ENCODE measurements at regions of chr1 and their contacts with region 1.

Region 1: GRCh38 chr1:179121159-179121938 is 39.5 kb downstream of the TOR3A start:
- DNase-seq: peak; percentile 62
- ATAC-seq: peak; percentile 66
- H3K4me3 ChIP-seq: no peak overlapping the region
- H3K27ac ChIP-seq: no peak overlapping the region; the same call in 1 of the 2 replicates
- H3K4me1 ChIP-seq: peaks cover 5% of the 10 kb centered on the region
- H3K27me3 ChIP-seq: no peaks in the 10 kb centered on the region
- CTCF ChIP-seq: peak; percentile 64
- POLR2A ChIP-seq: no peak
- RAD21 ChIP-seq: peak; percentile 62

Region 2: DNA sequence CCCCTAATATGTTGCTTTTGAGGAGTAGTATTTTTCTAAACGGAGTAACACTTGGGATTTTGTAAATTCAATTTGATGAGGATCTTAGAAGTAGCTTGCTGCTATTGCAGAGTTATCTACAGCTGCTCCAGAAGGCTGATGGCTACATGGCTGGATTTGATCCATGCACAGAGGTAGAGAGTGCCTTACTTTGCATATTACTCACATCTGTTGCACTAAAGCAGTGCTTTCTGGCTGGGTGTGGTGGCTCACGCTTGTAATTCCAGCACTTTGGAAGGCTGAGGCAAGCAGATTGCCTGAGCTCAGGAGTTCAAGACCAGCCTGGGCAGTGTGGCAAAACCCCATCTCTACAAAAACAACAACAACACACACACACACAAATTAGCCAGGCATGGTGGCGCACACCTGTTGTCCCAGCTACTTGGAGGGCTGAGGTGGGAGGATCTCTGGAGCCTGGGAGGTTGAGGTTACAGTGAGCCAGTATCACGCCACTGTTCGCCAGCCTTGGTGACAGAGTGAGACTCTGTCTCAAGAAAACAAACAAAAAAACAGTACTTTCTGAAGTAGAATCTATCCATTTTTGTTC is 371.7 kb before region 1 on chr1:
- CTCF ChIA-PET with region 1: no interaction called
- POLR2A ChIA-PET with region 1: no interaction called
- dilution Hi-C with region 1: no loop called
- in situ Hi-C with region 1: no loop called
- intact Hi-C with region 1: no loop called
- DNase-seq: no peak
- ATAC-seq: no peak
- H3K4me3 ChIP-seq: no peak overlapping the region
- H3K27ac ChIP-seq: no peak overlapping the region
- H3K4me1 ChIP-seq: peaks cover 8% of the 10 kb centered on the region
- H3K27me3 ChIP-seq: no peaks in the 10 kb centered on the region
- CTCF ChIP-seq: no peak
- POLR2A ChIP-seq: no peak
- RAD21 ChIP-seq: no peak

Region 3: DNA sequence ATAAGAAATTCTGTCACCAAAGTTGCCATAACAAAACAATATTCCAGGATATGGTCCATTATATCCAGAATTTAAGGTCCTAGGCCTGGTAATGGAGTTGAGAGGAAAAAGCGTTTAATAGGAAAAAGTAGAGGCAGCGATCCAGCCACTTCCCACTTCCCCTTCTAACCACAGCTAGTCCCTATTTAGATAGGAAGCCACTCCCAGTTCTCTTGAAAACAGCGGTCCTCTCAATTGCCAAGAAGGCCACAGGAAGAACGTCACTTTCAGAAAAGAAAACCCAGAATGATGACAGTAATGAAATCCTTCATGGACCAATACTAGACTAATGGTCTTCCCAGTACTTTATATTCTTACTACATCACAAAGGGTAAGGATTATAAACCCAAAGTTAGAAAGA is 69.5 kb after region 1 on chr1:
- CTCF ChIA-PET with region 1: interaction called, 3 read pairs
- POLR2A ChIA-PET with region 1: no interaction called
- dilution Hi-C with region 1: no loop called
- in situ Hi-C with region 1: loop called (anchors 5 kb)
- intact Hi-C with region 1: loop called (anchors 1 kb)
- DNase-seq: no peak
- ATAC-seq: no peak
- H3K4me3 ChIP-seq: no peak overlapping the region
- H3K27ac ChIP-seq: no peak overlapping the region
- H3K4me1 ChIP-seq: peaks cover 2% of the 10 kb centered on the region; the same call in 1 of the 2 replicates
- H3K27me3 ChIP-seq: no peaks in the 10 kb centered on the region
- CTCF ChIP-seq: no peak
- POLR2A ChIP-seq: no peak
- RAD21 ChIP-seq: no peak

Region 4: DNA sequence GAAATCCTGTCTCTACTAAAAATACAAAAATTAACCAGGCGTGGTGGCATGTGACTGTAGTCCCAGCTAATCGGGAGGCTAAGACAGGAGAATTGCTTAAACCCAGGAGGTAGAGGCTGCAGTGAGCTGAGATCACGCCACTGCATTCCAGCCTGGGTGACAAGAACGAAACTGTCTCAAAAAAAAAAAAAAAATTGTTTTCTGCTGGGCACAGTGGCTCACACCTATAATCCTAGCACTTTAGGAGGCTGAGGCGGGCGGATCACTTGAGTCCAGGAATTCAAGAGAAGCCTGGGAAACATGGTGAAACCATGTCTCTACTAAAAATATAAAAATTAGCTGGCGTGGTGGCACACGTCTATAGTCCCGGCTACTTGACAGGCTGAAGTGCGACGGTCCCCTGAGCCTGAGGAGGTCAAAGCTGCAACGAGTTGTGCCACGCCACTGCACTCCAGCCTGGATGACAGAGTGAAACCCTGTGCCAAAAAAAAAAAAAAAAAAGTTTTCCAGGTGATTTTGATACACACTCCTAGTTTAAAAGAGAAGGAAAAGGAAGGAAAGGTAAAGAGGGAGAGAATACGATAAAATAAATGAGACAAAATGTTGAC is 76.4 kb after region 1 on chr1:
- CTCF ChIA-PET with region 1: interaction called, 3 read pairs
- POLR2A ChIA-PET with region 1: no interaction called
- dilution Hi-C with region 1: no loop called
- in situ Hi-C with region 1: loop called (anchors 5 kb)
- intact Hi-C with region 1: loop called (anchors 1 kb)
- DNase-seq: no peak
- ATAC-seq: no peak
- H3K4me3 ChIP-seq: no peak overlapping the region
- H3K27ac ChIP-seq: no peak overlapping the region
- H3K4me1 ChIP-seq: no peaks in the 10 kb centered on the region
- H3K27me3 ChIP-seq: no peaks in the 10 kb centered on the region
- CTCF ChIP-seq: no peak
- POLR2A ChIP-seq: no peak
- RAD21 ChIP-seq: no peak

Measured in IMR-90 (cell line).